ENCODE measurements at regions of chr17 and their contacts with region 1.

Region 1: DNA sequence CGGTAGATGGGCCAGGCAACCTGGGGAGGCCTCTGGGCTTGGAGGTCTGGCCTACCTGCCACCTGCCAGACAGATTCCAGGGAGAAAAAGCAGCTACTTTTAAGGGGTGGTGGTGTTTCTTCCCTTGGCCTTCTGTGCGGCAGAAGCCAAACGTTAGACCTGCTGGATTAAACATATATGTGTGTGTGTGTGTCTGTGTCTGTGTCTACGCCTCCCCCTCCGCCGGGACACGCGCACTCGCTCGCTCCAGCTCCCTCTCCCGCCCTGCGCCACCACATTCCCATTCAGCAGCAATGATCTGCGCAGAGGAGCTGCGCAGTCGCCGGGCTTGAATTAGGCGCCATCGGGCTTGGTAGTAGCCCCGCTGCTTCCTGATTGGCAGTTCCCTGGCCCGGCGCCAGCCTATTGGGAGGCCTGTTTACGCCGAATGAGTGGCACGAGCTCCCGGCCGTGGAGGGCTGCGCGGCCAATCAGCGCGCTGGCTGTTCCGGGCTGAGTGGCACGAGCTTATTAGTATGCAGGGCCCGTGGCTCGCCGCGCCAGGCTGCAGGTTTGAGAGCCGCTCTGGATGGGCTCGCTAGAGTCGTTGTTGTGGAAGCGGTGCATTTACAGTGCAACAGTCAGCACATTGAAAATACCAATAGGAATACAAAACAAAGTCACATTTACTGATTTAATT is at the start of gene BAHCC1:
- DNase-seq: peak; percentile 100
- H3K4me3 ChIP-seq: peak within 1 kb of the TSS; percentile 94
- H3K4me3 Mint-ChIP-seq: peak within 1 kb of the TSS; percentile 84
- H3K27ac Mint-ChIP-seq: peak within 1 kb of the TSS; percentile 98
- H3K4me1 ChIP-seq: peaks cover 12% of the 10 kb centered on the region
- H3K4me1 Mint-ChIP-seq: peaks cover 28% of the 10 kb centered on the region
- H3K27me3 ChIP-seq: no peaks in the 10 kb centered on the region
- H3K27me3 Mint-ChIP-seq: no peaks in the 10 kb centered on the region
- CTCF ChIP-seq: no peak
- total RNA-seq, gene BAHCC1: 10.2 and 15.5 TPM in 2 replicates

Region 2: DNA sequence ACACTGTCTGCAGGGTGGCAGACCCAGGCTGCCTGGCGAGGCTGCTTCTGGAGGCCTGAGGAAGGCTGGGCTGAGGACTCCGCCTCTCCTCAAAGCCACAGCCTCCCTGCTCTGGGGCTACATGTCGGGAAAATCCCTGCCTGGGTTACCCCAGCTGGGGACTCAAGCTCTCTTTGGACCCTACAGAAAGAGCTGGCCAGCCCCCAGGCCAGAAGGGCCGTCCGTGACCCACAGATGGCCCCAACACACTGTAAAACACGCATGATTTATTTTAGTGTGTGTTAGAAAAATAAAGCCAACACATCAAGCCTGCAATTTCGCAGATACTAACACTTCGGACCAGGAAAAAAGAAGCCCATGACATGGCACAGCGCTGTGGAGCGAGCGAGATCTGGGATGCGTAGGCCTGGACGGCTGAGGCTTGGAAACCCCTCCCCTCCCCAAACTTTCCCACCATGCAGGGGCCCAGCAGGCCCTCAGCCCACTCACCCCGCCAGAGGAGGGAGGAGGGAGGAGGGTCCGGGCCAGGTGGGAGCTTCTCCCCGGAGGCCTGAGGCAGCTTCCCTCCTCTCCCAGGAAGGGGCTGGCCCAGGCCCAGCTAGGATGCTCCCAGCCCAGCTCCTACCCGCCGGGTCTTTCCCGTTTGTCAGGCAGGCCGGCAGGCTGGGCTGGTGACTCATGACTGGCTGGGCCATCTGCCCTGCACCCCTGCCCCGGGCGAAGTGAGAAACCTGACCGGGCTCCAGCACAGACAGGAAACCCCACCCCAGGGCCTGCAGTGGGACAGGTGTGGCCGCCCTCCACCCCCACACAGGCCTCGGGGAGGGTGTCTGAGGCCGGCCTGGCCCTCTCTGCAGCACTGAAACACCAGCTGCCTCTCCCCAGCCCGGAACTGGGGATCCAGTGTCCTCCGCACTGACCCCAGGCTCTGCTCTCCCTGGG is 65.8 kb before region 1 on chr17:
- CTCF ChIA-PET with region 1: interaction called, 10 read pairs
- POLR2A ChIA-PET with region 1: interaction called, 16 read pairs
- intact Hi-C with region 1: loop called (anchors 1 kb)
- DNase-seq: peak; percentile 98
- H3K4me3 ChIP-seq: peak overlapping the region; percentile 29
- H3K4me3 Mint-ChIP-seq: peak overlapping the region; percentile 74
- H3K27ac Mint-ChIP-seq: peak overlapping the region; percentile 95
- H3K4me1 ChIP-seq: peaks cover 54% of the 10 kb centered on the region
- H3K4me1 Mint-ChIP-seq: peaks cover 27% of the 10 kb centered on the region
- H3K27me3 ChIP-seq: no peaks in the 10 kb centered on the region
- H3K27me3 Mint-ChIP-seq: no peaks in the 10 kb centered on the region
- CTCF ChIP-seq: no peak

Region 3: GRCh38 chr17:81346090-81346907 is 48.8 kb before region 1 on chr17:
- CTCF ChIA-PET with region 1: interaction called, 3 read pairs
- POLR2A ChIA-PET with region 1: interaction called, 7 read pairs
- intact Hi-C with region 1: loop called (anchors 1 kb)
- DNase-seq: peak; percentile 98 to 100
- H3K4me3 ChIP-seq: peak overlapping the region; percentile 91
- H3K4me3 Mint-ChIP-seq: peak overlapping the region; percentile 85
- H3K27ac Mint-ChIP-seq: peak overlapping the region; percentile 90
- H3K4me1 ChIP-seq: peaks cover 12% of the 10 kb centered on the region
- H3K4me1 Mint-ChIP-seq: peaks cover 18% of the 10 kb centered on the region
- H3K27me3 ChIP-seq: no peaks in the 10 kb centered on the region
- H3K27me3 Mint-ChIP-seq: no peaks in the 10 kb centered on the region
- CTCF ChIP-seq: no peak

Region 4: GRCh38 chr17:81512560-81513371 is 117.7 kb after region 1 on chr17 and contains the start of gene ACTG1:
- CTCF ChIA-PET with region 1: interaction called, 3 read pairs
- POLR2A ChIA-PET with region 1: interaction called, 12 read pairs
- intact Hi-C with region 1: loop called (anchors 10 kb)
- DNase-seq: peak; percentile 93 to 96
- H3K4me3 ChIP-seq: peak within 1 kb of the TSS; percentile 72
- H3K4me3 Mint-ChIP-seq: peak within 1 kb of the TSS; percentile 92
- H3K27ac Mint-ChIP-seq: peak within 1 kb of the TSS; percentile 96
- H3K4me1 ChIP-seq: peaks cover 34% of the 10 kb centered on the region
- H3K4me1 Mint-ChIP-seq: peaks cover 32% of the 10 kb centered on the region
- H3K27me3 ChIP-seq: no peaks in the 10 kb centered on the region
- H3K27me3 Mint-ChIP-seq: no peaks in the 10 kb centered on the region
- CTCF ChIP-seq: no peak
- total RNA-seq, gene ACTG1: 1,436 and 1,933 TPM in 2 replicates

Region 5: DNA sequence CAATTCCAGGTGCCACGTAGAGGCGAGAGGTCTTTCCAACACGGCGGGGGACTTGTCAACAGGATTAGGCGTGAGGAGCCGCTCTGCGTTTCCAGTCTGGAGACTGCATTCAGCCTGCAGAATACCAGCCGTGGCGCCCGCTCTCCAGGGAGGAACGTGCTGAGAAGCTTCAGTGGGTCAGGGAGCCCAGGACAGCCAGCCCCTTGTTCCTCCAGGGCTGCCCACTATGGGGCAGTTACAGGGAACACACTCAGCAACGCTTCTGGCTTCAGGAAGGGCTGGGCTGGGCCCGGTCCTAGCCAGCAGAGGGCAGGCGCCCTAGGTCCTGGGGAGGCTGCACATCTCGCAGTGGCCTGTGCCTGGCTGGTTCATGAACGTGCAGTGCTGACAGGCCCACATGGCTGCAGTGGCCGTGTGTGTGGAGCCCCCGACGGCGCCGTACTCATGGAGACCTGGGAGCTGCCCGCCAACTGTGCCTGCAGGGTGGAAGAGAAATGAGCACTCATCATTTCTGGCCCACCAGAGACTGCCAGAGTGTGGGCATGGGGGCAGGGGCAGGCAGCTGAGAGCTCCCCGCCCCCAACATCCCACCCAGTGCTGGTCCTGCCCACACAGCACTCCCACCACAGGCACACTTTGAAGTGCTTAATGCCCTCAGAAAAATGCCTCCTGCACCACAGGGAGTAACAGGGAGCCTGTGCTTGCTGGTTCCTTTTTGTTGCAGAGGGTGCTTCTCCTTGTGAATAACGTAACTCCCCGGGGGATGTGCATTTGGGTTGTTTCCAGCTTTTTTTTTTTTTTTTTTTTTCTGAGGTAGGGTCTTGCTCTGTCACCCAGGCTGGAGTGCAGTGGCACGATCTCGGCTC is 164.1 kb after region 1 on chr17:
- CTCF ChIA-PET with region 1: no interaction called
- POLR2A ChIA-PET with region 1: no interaction called
- intact Hi-C with region 1: no loop called
- DNase-seq: peak; percentile 39 to 46
- H3K4me3 ChIP-seq: no peak overlapping the region
- H3K4me3 Mint-ChIP-seq: no peak overlapping the region
- H3K27ac Mint-ChIP-seq: no peak overlapping the region
- H3K4me1 ChIP-seq: peaks cover 18% of the 10 kb centered on the region
- H3K4me1 Mint-ChIP-seq: peaks cover 8% of the 10 kb centered on the region
- H3K27me3 ChIP-seq: no peaks in the 10 kb centered on the region
- H3K27me3 Mint-ChIP-seq: no peaks in the 10 kb centered on the region
- CTCF ChIP-seq: peak in 1 of 2 experiments; percentile 17